ENCODE measurements at regions of chr9 and their contacts with region 1.

Region 1: GRCh38 chr9:2014696-2015580 is at the start of gene SMARCA2:
- DNase-seq: peak; percentile 84
- ATAC-seq: peak; percentile 88
- H3K4me3 ChIP-seq: peak within 1 kb of the TSS; percentile 62 to 66
- H3K27ac ChIP-seq: no peak within 1 kb of the TSS
- H3K4me1 ChIP-seq: peaks cover 11 to 26% of the 10 kb centered on the region in 2 experiments; a peak in 3 of 4 replicates
- H3K27me3 ChIP-seq: peaks cover 29% of the 10 kb centered on the region
- CTCF ChIP-seq: no peak
- POLR2A ChIP-seq: no peak
- RAD21 ChIP-seq: no peak
- total RNA-seq, gene SMARCA2: 14.7 TPM

Region 2: GRCh38 chr9:2109069-2109650 is 94.2 kb after region 1 on chr9:
- CTCF ChIA-PET with region 1: no interaction called
- POLR2A ChIA-PET with region 1: no interaction called
- RAD21 ChIA-PET with region 1: no interaction called
- intact Hi-C with region 1: no loop called
- DNase-seq: no peak
- ATAC-seq: no peak
- H3K4me3 ChIP-seq: no peak overlapping the region
- H3K27ac ChIP-seq: no peak overlapping the region
- H3K4me1 ChIP-seq: no peaks in the 10 kb centered on the region
- H3K27me3 ChIP-seq: no peaks in the 10 kb centered on the region
- CTCF ChIP-seq: no peak
- POLR2A ChIP-seq: no peak
- RAD21 ChIP-seq: no peak

Region 3: GRCh38 chr9:2241836-2242741 is 227.2 kb after region 1 on chr9:
- CTCF ChIA-PET with region 1: no interaction called
- POLR2A ChIA-PET with region 1: no interaction called
- RAD21 ChIA-PET with region 1: no interaction called
- intact Hi-C with region 1: loop called (anchors 10 kb)
- DNase-seq: peak; percentile 83
- ATAC-seq: peak; percentile 92
- H3K4me3 ChIP-seq: peak overlapping the region; percentile 43 to 54
- H3K27ac ChIP-seq: peak overlapping the region; percentile 30
- H3K4me1 ChIP-seq: peaks cover 0 to 20% of the 10 kb centered on the region in 2 experiments; a peak in 2 of 4 replicates
- H3K27me3 ChIP-seq: no peaks in the 10 kb centered on the region
- CTCF ChIP-seq: no peak
- POLR2A ChIP-seq: peak; percentile 37
- RAD21 ChIP-seq: 0 out of 2 replicates have a peak, but pooled peaks have one; percentile 14

Region 4: GRCh38 chr9:2502760-2503159 is 487.8 kb after region 1 on chr9:
- CTCF ChIA-PET with region 1: no interaction called
- POLR2A ChIA-PET with region 1: no interaction called
- RAD21 ChIA-PET with region 1: no interaction called
- intact Hi-C with region 1: no loop called
- DNase-seq: no peak
- ATAC-seq: no peak
- H3K4me3 ChIP-seq: no peak overlapping the region
- H3K27ac ChIP-seq: no peak overlapping the region
- H3K4me1 ChIP-seq: no peaks in the 10 kb centered on the region
- H3K27me3 ChIP-seq: peaks cover 34% of the 10 kb centered on the region
- CTCF ChIP-seq: no peak
- POLR2A ChIP-seq: no peak
- RAD21 ChIP-seq: no peak

Region 5: DNA sequence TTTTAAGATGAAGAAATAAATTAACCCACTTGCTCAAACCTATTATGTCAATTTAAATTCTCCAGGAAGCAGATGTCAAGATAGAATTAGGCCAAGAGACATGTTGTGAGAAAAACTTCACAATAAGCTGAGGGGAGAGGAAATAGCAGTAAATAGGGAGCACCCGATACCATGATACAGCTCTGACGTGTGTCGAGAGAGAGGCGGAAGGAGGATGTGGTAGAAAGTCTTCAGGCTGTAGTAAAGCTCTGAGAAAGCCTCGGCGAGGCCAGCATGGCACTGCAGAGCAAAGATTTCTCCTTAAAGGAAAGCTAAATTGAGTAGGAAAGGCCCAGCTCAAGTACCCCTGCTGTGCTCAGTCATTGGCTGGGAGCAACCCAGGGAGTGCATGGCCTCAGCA is 835.0 kb after region 1 on chr9:
- CTCF ChIA-PET with region 1: no interaction called
- POLR2A ChIA-PET with region 1: no interaction called
- RAD21 ChIA-PET with region 1: no interaction called
- intact Hi-C with region 1: loop called (anchors 10 kb)
- DNase-seq: no peak
- ATAC-seq: no peak
- H3K4me3 ChIP-seq: no peak overlapping the region
- H3K27ac ChIP-seq: no peak overlapping the region
- H3K4me1 ChIP-seq: peaks cover 3 to 7% of the 10 kb centered on the region in 2 experiments; a peak in 3 of 4 replicates
- H3K27me3 ChIP-seq: peaks cover 4% of the 10 kb centered on the region
- CTCF ChIP-seq: no peak
- POLR2A ChIP-seq: no peak
- RAD21 ChIP-seq: no peak